ENCODE measurements at regions of chr5 and their contacts with region 1.

Region 1: GRCh38 chr5:79464695-79465332 is 49.1 kb downstream of the HOMER1 start:
- DNase-seq: no peak
- H3K4me3 ChIP-seq: no peak overlapping the region
- H3K27ac ChIP-seq: no peak overlapping the region
- H3K4me1 ChIP-seq: peaks cover 0 to 4% (median 0%) of the 10 kb centered on the region in 6 donors
- H3K27me3 ChIP-seq: no peaks in the 10 kb centered on the region
- CTCF ChIP-seq: peak in 7 of 11 experiments; percentile 41 to 54 (median 52)
- POLR2A ChIP-seq: no peak

Region 2: DNA sequence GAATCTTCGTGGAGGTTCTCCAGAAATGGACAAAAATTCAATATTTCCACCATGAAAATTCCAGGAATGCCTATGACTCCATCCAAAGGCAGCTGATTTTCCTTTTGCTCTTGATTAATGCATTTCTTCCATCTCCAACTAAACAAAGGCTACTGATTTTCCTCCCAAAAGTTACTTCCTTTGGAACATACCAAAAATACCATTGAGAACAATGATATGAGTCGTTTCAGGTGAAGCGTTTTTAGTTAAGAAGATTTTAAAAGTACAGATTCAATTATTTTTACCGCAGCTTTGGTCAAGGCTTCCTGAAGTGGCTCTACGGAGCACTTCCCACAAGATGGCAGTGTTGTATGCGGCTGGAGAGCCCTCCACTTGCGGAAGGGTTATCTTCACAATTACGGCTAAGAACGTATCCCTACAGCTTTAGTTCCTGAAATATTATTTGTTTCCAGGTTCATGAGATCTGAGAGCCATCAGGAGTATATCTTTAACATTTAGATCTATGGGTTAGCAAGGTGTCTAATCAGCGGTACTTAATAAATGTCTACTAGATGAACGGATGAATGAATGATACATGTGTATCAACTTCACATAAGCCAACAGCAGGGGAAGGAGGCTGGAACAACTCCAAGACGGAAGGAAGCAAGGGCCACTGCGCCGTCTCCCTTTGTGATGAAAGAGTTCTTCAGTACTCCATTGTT is 443.8 kb before region 1 on chr5:
- intact Hi-C with region 1: loop called (anchors 10 kb)
- DNase-seq: no peak
- H3K4me3 ChIP-seq: peak overlapping the region in 1 of 8 donors; percentile 13
- H3K27ac ChIP-seq: no peak overlapping the region
- H3K4me1 ChIP-seq: peaks cover 0 to 14% (median 11%) of the 10 kb centered on the region in 6 donors
- H3K27me3 ChIP-seq: peaks cover 0 to 60% (median 12%) of the 10 kb centered on the region in 7 donors
- CTCF ChIP-seq: peak in 10 of 11 experiments; percentile 29 to 73 (median 54)
- POLR2A ChIP-seq: no peak

Region 3: DNA sequence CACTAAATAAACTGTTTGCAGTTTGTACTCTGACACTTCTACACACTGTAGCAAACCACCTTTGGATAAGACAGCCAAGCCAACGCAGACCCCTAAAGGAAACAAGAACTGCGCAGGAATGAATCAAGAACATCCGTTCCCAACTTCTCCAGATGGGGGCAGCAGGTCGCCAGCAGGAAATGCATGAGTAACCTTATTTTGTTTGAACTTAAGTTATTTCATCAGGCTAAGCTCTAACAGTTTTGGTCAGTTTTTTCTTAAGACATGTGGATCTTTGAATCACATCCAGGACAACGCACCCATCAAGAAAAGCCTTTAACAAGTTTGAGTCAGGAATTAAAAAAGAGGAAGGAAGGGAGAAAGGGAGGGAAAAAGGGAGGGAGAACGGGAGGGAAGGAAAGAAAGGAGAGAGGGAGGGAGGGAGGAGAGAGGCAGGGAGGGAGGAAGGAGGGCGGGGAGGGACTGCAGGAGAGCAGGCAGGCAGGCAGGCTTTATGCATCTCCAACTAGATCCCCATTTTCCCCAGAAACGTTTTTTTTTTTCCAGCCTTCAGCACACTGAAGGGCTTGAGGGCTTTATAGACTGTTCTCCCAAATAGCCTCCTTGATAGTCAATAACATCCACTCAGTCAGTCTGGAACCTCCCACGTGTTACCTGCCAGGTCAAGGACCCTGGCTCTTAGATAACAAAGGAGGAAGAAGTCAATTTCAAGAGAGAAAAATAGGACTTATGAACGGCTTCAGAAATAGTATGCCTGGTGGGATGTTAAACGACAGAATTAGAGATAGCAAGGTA is 331.0 kb before region 1 on chr5:
- intact Hi-C with region 1: loop called (anchors 5 kb)
- DNase-seq: no peak
- H3K4me3 ChIP-seq: peak overlapping the region in 2 of 8 donors; percentile 10 to 47
- H3K27ac ChIP-seq: peak overlapping the region in 5 of 8 donors; percentile 8 to 20 (median 15)
- H3K4me1 ChIP-seq: peaks cover 7 to 19% (median 11%) of the 10 kb centered on the region in 6 donors
- H3K27me3 ChIP-seq: no peaks in the 10 kb centered on the region
- CTCF ChIP-seq: peak in 9 of 11 experiments; percentile 25 to 73 (median 49)
- POLR2A ChIP-seq: no peak

Region 4: DNA sequence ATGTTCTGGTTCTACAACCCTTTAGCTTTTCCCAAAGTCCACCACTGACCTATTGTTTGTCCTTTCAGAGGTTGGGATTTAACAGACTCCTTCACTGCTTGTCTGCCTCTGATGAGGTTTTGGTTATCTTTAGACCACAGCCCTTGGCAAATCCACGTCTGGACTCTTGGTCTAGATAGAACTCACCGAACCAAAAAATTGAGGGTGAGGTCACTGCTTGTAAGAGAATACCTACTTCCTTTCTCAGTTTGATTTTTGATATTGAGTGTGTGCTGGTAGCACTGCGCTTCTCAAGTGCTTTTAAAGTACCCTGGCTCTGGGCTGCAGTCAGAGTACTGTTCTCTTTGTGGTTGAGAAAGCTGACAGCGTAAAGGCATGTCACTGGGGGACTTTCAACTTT is 167.2 kb before region 1 on chr5:
- intact Hi-C with region 1: no loop called
- DNase-seq: no peak
- H3K4me3 ChIP-seq: no peak overlapping the region
- H3K27ac ChIP-seq: no peak overlapping the region
- H3K4me1 ChIP-seq: no peaks in the 10 kb centered on the region
- H3K27me3 ChIP-seq: no peaks in the 10 kb centered on the region
- CTCF ChIP-seq: no peak
- POLR2A ChIP-seq: no peak

Region 5: DNA sequence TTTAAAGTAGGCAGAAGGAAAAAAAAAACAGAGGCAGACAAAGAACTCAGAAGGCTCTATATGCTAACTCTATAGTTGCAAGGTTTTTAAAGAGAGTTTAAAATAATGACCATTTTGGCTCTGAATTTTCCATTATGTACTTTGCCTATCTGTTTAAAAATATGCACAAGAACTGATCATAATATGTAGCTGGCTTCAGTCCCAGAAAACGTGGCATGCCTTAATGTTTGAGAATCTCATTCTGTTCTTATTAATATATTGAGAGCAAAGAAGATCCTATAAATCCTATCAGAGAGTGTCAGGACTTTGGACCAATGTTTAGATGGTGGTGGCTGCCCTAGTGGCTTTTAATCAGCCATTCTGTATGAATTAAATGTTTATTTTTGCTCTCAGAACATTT is 107.4 kb before region 1 on chr5:
- intact Hi-C with region 1: no loop called
- DNase-seq: no peak
- H3K4me3 ChIP-seq: no peak overlapping the region
- H3K27ac ChIP-seq: no peak overlapping the region
- H3K4me1 ChIP-seq: no peaks in the 10 kb centered on the region
- H3K27me3 ChIP-seq: peaks cover 0 to 6% (median 0%) of the 10 kb centered on the region in 7 donors
- CTCF ChIP-seq: no peak
- POLR2A ChIP-seq: no peak

Measured in spleen (tissue), 13 donors.